Gastrocnemius medialis (tissue), 4 donors: ENCODE measurements at regions of chr10 and their contacts with region 1.

Region 1: GRCh38 chr10:33306701-33307512 is 27.6 kb downstream of the NRP1 start:
- DNase-seq: no peak
- ATAC-seq: no peak
- H3K4me3 ChIP-seq: no peak overlapping the region
- H3K27ac ChIP-seq: peak overlapping the region in 3 of 4 donors; percentile 13 to 60 (median 52)
- H3K4me1 ChIP-seq: peaks cover 40 to 57% of the 10 kb centered on the region in 2 donors
- H3K27me3 ChIP-seq: no peaks in the 10 kb centered on the region
- CTCF ChIP-seq: no peak
- POLR2A ChIP-seq: no peak

Region 2: GRCh38 chr10:33211106-33211878 is 95.6 kb before region 1 on chr10:
- in situ Hi-C with region 1: loop called in 1 of 4 experiments (anchors 25 kb)
- intact Hi-C with region 1: no loop called
- DNase-seq: peak in 1 of 2 donors; percentile 49
- ATAC-seq: peak; percentile 56 to 59
- H3K4me3 ChIP-seq: no peak overlapping the region
- H3K27ac ChIP-seq: peak overlapping the region; percentile 44 to 57 (median 52)
- H3K4me1 ChIP-seq: peaks cover 0 to 15% of the 10 kb centered on the region in 2 donors
- H3K27me3 ChIP-seq: no peaks in the 10 kb centered on the region
- CTCF ChIP-seq: no peak
- POLR2A ChIP-seq: no peak

Region 3: GRCh38 chr10:33291053-33291592 is 15.8 kb before region 1 on chr10:
- in situ Hi-C with region 1: no loop called
- intact Hi-C with region 1: no loop called
- DNase-seq: no peak
- ATAC-seq: peak; percentile 59 to 69
- H3K4me3 ChIP-seq: no peak overlapping the region
- H3K27ac ChIP-seq: peak overlapping the region in 3 of 4 donors; percentile 50 to 54 (median 53)
- H3K4me1 ChIP-seq: peaks cover 46 to 76% of the 10 kb centered on the region in 2 donors
- H3K27me3 ChIP-seq: no peaks in the 10 kb centered on the region
- CTCF ChIP-seq: no peak
- POLR2A ChIP-seq: no peak